Upper lobe of right lung (tissue), 1 donor: ENCODE measurements at regions of chr1 and their contacts with region 1.

Region 1: GRCh38 chr1:39901698-39902459 is at the start of gene MYCL:
- DNase-seq: peak; percentile 95
- ATAC-seq: peak; percentile 94
- H3K4me3 ChIP-seq: peak within 1 kb of the TSS; percentile 56
- H3K27ac ChIP-seq: peak within 1 kb of the TSS; percentile 36
- H3K4me1 ChIP-seq: peaks cover 9% of the 10 kb centered on the region
- H3K27me3 ChIP-seq: no peaks in the 10 kb centered on the region
- CTCF ChIP-seq: peak; percentile 73
- total RNA-seq, gene MYCL: 3.6 TPM

Region 2: DNA sequence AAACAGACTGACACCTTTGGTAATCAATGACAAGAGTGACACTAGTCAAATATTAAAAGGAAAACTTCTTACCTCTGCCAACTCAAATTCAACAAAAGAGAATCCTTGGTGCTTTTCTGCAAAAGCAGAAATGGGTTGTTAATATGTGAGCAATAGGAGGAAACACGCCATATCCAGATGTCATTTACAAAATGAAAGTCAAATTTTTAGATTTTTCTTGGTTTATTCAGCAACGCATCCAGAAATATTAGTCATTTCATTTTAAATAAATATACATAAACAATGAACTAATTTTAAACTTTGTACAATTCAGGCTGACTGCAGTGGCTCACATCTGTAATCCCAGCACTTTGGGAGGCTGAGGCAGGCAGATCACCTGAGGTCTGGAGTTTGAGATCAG is 347.6 kb before region 1 on chr1:
- intact Hi-C with region 1: no loop called
- DNase-seq: no peak
- ATAC-seq: no peak
- H3K4me3 ChIP-seq: no peak overlapping the region
- H3K27ac ChIP-seq: no peak overlapping the region
- H3K4me1 ChIP-seq: no peaks in the 10 kb centered on the region
- H3K27me3 ChIP-seq: no peaks in the 10 kb centered on the region
- CTCF ChIP-seq: no peak

Region 3: GRCh38 chr1:39825432-39825951 is 76.4 kb before region 1 on chr1:
- intact Hi-C with region 1: loop called (anchors 10 kb)
- DNase-seq: no peak
- ATAC-seq: peak; percentile 23
- H3K4me3 ChIP-seq: no peak overlapping the region
- H3K27ac ChIP-seq: no peak overlapping the region
- H3K4me1 ChIP-seq: no peaks in the 10 kb centered on the region
- H3K27me3 ChIP-seq: no peaks in the 10 kb centered on the region
- CTCF ChIP-seq: no peak

Region 4: GRCh38 chr1:39973503-39974135 is 71.7 kb after region 1 on chr1:
- intact Hi-C with region 1: no loop called
- DNase-seq: peak; percentile 89
- ATAC-seq: peak; percentile 82
- H3K4me3 ChIP-seq: no peak overlapping the region
- H3K27ac ChIP-seq: no peak overlapping the region
- H3K4me1 ChIP-seq: peaks cover 3% of the 10 kb centered on the region
- H3K27me3 ChIP-seq: no peaks in the 10 kb centered on the region
- CTCF ChIP-seq: peak; percentile 97